CD8-positive, alpha-beta T cell (primary cell): ENCODE measurements at regions of chr11 and their contacts with region 1.

Region 1: DNA sequence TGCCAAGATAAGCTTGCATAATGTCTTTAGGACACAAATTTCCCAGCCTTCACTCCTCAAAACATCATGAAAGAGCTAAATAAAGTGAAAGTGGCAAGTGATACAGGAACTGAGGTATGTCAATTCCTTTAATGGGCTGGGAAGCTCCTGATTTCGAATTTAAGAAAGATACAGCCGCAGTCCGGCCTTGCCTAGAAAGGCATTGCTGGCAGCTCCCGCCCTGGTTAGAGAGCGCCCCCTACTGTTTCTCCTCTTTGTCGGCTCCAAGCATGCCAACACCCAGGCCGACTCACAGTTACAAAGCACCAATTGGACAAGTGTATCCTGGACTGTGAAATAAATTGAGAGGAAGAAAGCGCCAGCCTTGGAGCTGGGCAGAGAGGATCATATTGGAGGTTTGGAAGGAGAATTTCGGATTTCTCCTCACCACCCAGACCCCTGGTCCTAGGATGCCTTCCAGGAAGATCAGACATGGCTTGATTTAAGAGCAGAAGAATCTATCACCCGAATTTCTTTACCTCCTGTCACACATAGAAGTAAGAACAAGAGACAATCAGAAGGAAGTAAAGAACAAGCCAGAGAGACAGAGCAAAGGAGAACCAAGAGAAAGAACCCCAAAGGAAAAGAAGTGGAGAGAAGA is 84.0 kb downstream of the FAM76B start:
- DNase-seq: peak; percentile 64 to 90 (median 87)
- ATAC-seq: peak; percentile 90
- H3K4me3 ChIP-seq: no peak overlapping the region
- H3K4me3 Mint-ChIP-seq: no peak overlapping the region
- H3K27ac ChIP-seq: no peak overlapping the region
- H3K27ac Mint-ChIP-seq: no peak overlapping the region
- H3K4me1 ChIP-seq: peaks cover 44% of the 10 kb centered on the region
- H3K4me1 Mint-ChIP-seq: peaks cover 8% of the 10 kb centered on the region
- H3K27me3 ChIP-seq: no peaks in the 10 kb centered on the region
- H3K27me3 Mint-ChIP-seq: no peaks in the 10 kb centered on the region
- CTCF ChIP-seq: peak; percentile 83

Region 2: GRCh38 chr11:95089620-95090542 is 615.7 kb before region 1 on chr11 and contains the start of gene ENDOD1:
- CTCF ChIA-PET with region 1: interaction called, 7 read pairs
- POLR2A ChIA-PET with region 1: interaction called, 3 read pairs
- intact Hi-C with region 1: loop called in 1 of 2 experiments (anchors 5 kb)
- DNase-seq: peak; percentile 75 to 92 (median 83)
- ATAC-seq: peak; percentile 94
- H3K4me3 ChIP-seq: peak within 1 kb of the TSS; percentile 66 to 78
- H3K4me3 Mint-ChIP-seq: peak within 1 kb of the TSS; percentile 93
- H3K27ac ChIP-seq: peak within 1 kb of the TSS; percentile 77 to 84
- H3K27ac Mint-ChIP-seq: peak within 1 kb of the TSS; percentile 99
- H3K4me1 ChIP-seq: peaks cover 25% of the 10 kb centered on the region
- H3K4me1 Mint-ChIP-seq: peaks cover 50% of the 10 kb centered on the region
- H3K27me3 ChIP-seq: no peaks in the 10 kb centered on the region
- H3K27me3 Mint-ChIP-seq: no peaks in the 10 kb centered on the region
- CTCF ChIP-seq: no peak
- total RNA-seq, gene ENDOD1: 5.6 to 5.9 TPM

Region 3: DNA sequence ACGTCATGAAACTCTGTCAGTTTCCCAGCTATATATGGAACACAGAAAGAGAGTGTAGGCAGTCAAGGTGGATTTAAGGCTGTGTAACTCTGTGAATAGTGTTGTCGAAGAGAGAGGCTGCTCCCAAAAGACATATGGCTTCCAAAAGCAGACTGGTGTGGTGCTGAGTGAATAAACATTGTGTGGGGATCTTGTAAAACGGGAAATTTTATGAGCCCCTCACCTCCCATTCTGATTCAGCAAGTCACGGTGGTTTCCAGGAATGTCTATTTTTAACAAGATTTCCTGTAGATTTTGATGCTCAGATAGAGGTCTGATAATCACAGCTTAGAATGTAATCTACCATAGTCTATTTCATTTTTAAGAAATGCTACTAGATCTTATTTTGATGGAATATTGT is 542.5 kb before region 1 on chr11:
- CTCF ChIA-PET with region 1: interaction called, 400 read pairs
- POLR2A ChIA-PET with region 1: no interaction called
- intact Hi-C with region 1: no loop called
- DNase-seq: no peak
- ATAC-seq: no peak
- H3K4me3 ChIP-seq: no peak overlapping the region
- H3K4me3 Mint-ChIP-seq: no peak overlapping the region
- H3K27ac ChIP-seq: no peak overlapping the region
- H3K27ac Mint-ChIP-seq: peak overlapping the region; percentile 41
- H3K4me1 ChIP-seq: peaks cover 2% of the 10 kb centered on the region
- H3K4me1 Mint-ChIP-seq: peaks cover 15% of the 10 kb centered on the region
- H3K27me3 ChIP-seq: no peaks in the 10 kb centered on the region
- H3K27me3 Mint-ChIP-seq: no peaks in the 10 kb centered on the region
- CTCF ChIP-seq: no peak

Region 4: DNA sequence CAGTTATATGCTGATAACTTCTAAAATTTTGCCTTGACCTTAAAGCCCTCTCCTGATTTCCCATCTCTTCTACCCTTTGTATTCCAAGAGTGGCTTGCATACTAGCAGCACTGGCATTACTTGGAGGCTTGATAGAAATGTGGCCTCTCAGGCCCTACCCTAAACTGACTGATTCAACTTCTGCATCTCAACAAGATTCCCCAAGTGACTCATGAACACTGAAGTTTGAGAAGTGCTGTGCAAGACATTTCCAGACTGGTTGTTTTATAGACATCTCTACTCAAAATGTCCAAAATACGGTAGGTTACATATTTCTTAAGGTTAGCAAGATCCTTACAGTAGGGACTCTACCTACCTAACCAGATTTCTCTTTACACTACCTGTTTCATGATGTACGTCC is 523.2 kb before region 1 on chr11:
- CTCF ChIA-PET with region 1: interaction called, 12 read pairs
- POLR2A ChIA-PET with region 1: no interaction called
- intact Hi-C with region 1: no loop called
- DNase-seq: no peak
- ATAC-seq: no peak
- H3K4me3 ChIP-seq: no peak overlapping the region
- H3K4me3 Mint-ChIP-seq: no peak overlapping the region
- H3K27ac ChIP-seq: no peak overlapping the region
- H3K27ac Mint-ChIP-seq: no peak overlapping the region
- H3K4me1 ChIP-seq: no peaks in the 10 kb centered on the region
- H3K4me1 Mint-ChIP-seq: peaks cover 2% of the 10 kb centered on the region
- H3K27me3 ChIP-seq: no peaks in the 10 kb centered on the region
- H3K27me3 Mint-ChIP-seq: no peaks in the 10 kb centered on the region
- CTCF ChIP-seq: no peak

Region 5: GRCh38 chr11:95371153-95371552 is 334.5 kb before region 1 on chr11:
- CTCF ChIA-PET with region 1: interaction called, 11 read pairs
- POLR2A ChIA-PET with region 1: no interaction called
- intact Hi-C with region 1: no loop called
- DNase-seq: no peak
- ATAC-seq: no peak
- H3K4me3 ChIP-seq: no peak overlapping the region
- H3K4me3 Mint-ChIP-seq: no peak overlapping the region
- H3K27ac ChIP-seq: no peak overlapping the region
- H3K27ac Mint-ChIP-seq: no peak overlapping the region
- H3K4me1 ChIP-seq: no peaks in the 10 kb centered on the region
- H3K4me1 Mint-ChIP-seq: no peaks in the 10 kb centered on the region
- H3K27me3 ChIP-seq: peaks cover 0 to 2% of the 10 kb centered on the region in 2 experiments
- H3K27me3 Mint-ChIP-seq: peaks cover 9% of the 10 kb centered on the region
- CTCF ChIP-seq: no peak

Region 6: DNA sequence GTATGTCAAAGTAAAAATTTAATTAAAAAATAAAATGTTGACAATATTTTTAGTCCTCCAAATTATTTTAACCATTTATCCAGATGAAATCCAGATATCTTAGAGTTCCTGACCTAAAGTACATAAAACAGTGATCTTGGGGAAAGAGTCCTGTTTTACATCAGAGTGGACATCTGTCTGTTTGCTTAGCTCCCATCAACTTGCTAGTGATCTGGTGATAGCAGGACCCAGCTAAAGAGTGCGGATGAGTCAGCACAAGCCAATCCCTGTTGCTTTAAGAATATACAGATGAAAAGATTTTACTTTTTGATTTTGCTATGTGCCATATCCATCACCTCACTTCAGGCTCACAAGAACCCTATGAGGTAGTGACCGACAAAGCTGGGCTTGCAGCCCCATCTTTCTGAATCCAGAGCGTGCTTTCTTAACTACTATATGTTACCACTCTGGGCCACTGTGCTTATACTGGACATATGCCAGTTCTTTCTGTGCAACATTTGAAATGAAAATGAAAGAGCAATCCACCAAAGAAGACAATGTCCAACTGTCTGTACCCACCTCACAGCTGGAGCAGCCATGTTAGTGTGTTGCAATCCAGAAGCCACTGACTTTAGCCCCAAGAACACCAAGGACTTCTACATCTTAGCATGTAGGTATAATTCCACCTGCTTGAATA is 307.0 kb before region 1 on chr11:
- CTCF ChIA-PET with region 1: no interaction called
- POLR2A ChIA-PET with region 1: no interaction called
- intact Hi-C with region 1: no loop called
- DNase-seq: no peak
- ATAC-seq: no peak
- H3K4me3 ChIP-seq: no peak overlapping the region
- H3K4me3 Mint-ChIP-seq: no peak overlapping the region
- H3K27ac ChIP-seq: no peak overlapping the region
- H3K27ac Mint-ChIP-seq: no peak overlapping the region
- H3K4me1 ChIP-seq: no peaks in the 10 kb centered on the region
- H3K4me1 Mint-ChIP-seq: no peaks in the 10 kb centered on the region
- H3K27me3 ChIP-seq: no peaks in the 10 kb centered on the region
- H3K27me3 Mint-ChIP-seq: no peaks in the 10 kb centered on the region
- CTCF ChIP-seq: no peak

Region 7: GRCh38 chr11:95652002-95652472 is 53.6 kb before region 1 on chr11:
- CTCF ChIA-PET with region 1: no interaction called
- POLR2A ChIA-PET with region 1: no interaction called
- intact Hi-C with region 1: no loop called
- DNase-seq: no peak
- ATAC-seq: no peak
- H3K4me3 ChIP-seq: no peak overlapping the region
- H3K4me3 Mint-ChIP-seq: no peak overlapping the region
- H3K27ac ChIP-seq: no peak overlapping the region
- H3K27ac Mint-ChIP-seq: no peak overlapping the region
- H3K4me1 ChIP-seq: no peaks in the 10 kb centered on the region
- H3K4me1 Mint-ChIP-seq: no peaks in the 10 kb centered on the region
- H3K27me3 ChIP-seq: no peaks in the 10 kb centered on the region
- H3K27me3 Mint-ChIP-seq: peaks cover 3% of the 10 kb centered on the region
- CTCF ChIP-seq: no peak

Region 8: GRCh38 chr11:95715777-95716241 is 10.2 kb after region 1 on chr11:
- CTCF ChIA-PET with region 1: interaction called, 14 read pairs
- POLR2A ChIA-PET with region 1: no interaction called
- intact Hi-C with region 1: no loop called
- DNase-seq: peak in 2 of 9 experiments; percentile 22 to 39
- ATAC-seq: peak; percentile 62
- H3K4me3 ChIP-seq: no peak overlapping the region
- H3K4me3 Mint-ChIP-seq: no peak overlapping the region
- H3K27ac ChIP-seq: no peak overlapping the region
- H3K27ac Mint-ChIP-seq: no peak overlapping the region
- H3K4me1 ChIP-seq: no peaks in the 10 kb centered on the region
- H3K4me1 Mint-ChIP-seq: peaks cover 18% of the 10 kb centered on the region
- H3K27me3 ChIP-seq: no peaks in the 10 kb centered on the region
- H3K27me3 Mint-ChIP-seq: peaks cover 5% of the 10 kb centered on the region
- CTCF ChIP-seq: no peak

Region 9: DNA sequence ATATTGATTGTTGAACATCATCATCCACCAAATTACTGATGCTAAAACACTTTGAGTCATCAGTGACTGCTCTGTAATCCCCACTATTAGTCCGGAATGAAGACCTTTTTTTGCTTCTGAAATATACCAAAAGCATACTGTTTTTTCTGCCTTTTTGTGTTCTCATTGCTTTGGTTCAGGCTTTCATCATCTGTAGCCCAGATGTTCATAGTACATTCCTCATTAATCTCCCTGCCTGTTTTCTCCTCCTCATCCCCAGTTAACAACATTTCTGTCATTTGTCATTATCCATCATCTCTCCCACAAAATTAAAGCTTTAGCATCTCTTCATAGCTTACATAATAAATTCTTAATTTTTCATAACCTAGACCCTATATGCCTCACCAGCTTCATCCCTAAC is 93.9 kb after region 1 on chr11:
- CTCF ChIA-PET with region 1: no interaction called
- POLR2A ChIA-PET with region 1: no interaction called
- intact Hi-C with region 1: no loop called
- DNase-seq: no peak
- ATAC-seq: no peak
- H3K4me3 ChIP-seq: no peak overlapping the region
- H3K4me3 Mint-ChIP-seq: no peak overlapping the region
- H3K27ac ChIP-seq: no peak overlapping the region
- H3K27ac Mint-ChIP-seq: no peak overlapping the region
- H3K4me1 ChIP-seq: no peaks in the 10 kb centered on the region
- H3K4me1 Mint-ChIP-seq: peaks cover 26% of the 10 kb centered on the region
- H3K27me3 ChIP-seq: no peaks in the 10 kb centered on the region
- H3K27me3 Mint-ChIP-seq: no peaks in the 10 kb centered on the region
- CTCF ChIP-seq: no peak